ENCODE measurements at regions of chr14 and their contacts with region 1.

Region 1: DNA sequence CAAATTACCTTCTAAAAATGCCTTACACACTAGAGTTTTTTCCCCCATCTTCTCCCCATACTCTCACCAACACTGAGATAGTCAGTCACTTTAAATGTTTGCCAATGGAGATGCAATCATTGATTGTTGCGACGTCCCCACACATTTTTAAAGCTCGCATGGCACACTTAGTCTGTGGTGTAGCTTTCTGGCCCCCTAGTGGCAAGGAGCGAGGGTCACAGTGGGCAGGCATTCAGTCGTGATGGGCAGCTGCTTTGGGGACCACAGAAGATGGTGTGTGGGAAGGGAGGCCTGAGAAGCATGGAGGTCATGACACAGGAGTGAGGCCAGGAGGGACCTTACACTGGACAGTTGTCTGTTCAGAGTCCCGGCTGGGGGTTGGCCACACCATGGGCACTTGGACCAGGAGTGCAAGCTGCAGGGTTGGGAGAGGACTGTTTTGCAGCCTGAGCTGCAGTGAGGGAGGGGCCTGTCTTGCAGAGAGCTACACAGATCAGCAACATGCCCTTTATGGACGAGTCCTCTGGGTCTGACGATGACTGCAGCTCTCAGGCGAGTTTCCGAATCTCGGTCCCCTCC is 28.7 kb downstream of the PIGH start:
- DNase-seq: peak; percentile 78
- H3K4me3 Mint-ChIP-seq: no peak overlapping the region
- H3K27ac Mint-ChIP-seq: no peak overlapping the region
- H3K4me1 Mint-ChIP-seq: peaks cover 13% of the 10 kb centered on the region
- H3K27me3 Mint-ChIP-seq: no peaks in the 10 kb centered on the region

Region 2: GRCh38 chr14:67426983-67427606 is 144.3 kb before region 1 on chr14:
- CTCF ChIA-PET with region 1: interaction called, 27 read pairs
- POLR2A ChIA-PET with region 1: no interaction called
- DNase-seq: peak; percentile 84
- H3K4me3 Mint-ChIP-seq: no peak overlapping the region
- H3K27ac Mint-ChIP-seq: no peak overlapping the region
- H3K4me1 Mint-ChIP-seq: peaks cover 6% of the 10 kb centered on the region
- H3K27me3 Mint-ChIP-seq: peaks cover 26% of the 10 kb centered on the region

Region 3: GRCh38 chr14:67557126-67557525 is 14.2 kb before region 1 on chr14:
- CTCF ChIA-PET with region 1: interaction called, 11 read pairs
- POLR2A ChIA-PET with region 1: no interaction called
- DNase-seq: no peak
- H3K4me3 Mint-ChIP-seq: no peak overlapping the region
- H3K27ac Mint-ChIP-seq: no peak overlapping the region
- H3K4me1 Mint-ChIP-seq: no peaks in the 10 kb centered on the region
- H3K27me3 Mint-ChIP-seq: peaks cover 3% of the 10 kb centered on the region

Region 4: DNA sequence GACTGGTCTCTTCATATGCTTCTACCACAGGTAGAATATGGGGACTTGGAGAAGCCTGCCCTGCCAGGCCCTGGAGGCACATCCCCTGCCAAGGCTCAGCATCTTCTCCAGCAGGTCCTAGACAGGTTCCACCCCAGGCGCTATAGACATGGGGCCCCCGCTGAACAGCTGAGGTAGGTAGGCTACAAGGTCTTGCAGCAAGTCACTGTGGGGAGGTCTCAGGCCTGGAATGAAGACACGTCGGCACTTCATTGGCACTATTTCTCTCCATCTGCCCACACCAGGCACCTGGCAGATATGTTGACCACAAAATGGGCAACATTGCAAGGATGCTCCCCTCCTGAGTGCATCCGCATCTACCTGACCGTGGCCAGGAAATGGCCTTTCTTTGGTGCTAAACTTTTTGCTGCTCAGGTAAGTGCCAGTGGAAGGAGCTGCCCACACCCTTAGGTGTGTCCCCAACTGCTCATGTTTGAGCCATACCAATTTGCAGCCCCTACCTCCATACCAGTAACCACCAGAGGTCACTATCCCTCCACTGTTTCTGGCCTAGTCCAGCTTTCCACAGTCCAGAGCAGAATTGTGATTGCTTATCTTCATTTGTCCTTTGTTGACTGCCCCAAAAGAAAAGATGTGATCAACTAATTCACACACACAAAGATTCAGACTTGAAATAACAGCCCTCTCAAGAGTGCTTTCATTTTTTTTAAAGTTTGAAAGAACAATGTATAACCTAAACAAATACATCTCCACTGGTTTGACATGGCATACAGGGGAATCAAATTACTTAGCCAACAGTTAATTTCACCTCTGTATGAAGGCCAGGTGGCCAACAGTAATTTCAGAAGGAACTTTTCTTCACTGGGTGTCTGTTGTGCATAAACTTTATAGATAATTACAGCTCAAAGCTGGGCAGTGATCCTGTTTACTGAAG is 12.6 kb after region 1 on chr14:
- CTCF ChIA-PET with region 1: interaction called, 10 read pairs
- POLR2A ChIA-PET with region 1: no interaction called
- DNase-seq: peak; percentile 40
- H3K4me3 Mint-ChIP-seq: no peak overlapping the region
- H3K27ac Mint-ChIP-seq: no peak overlapping the region
- H3K4me1 Mint-ChIP-seq: peaks cover 7% of the 10 kb centered on the region
- H3K27me3 Mint-ChIP-seq: no peaks in the 10 kb centered on the region

Region 5: GRCh38 chr14:67589204-67589770 is 17.9 kb after region 1 on chr14:
- CTCF ChIA-PET with region 1: interaction called, 10 read pairs
- POLR2A ChIA-PET with region 1: no interaction called
- DNase-seq: no peak
- H3K4me3 Mint-ChIP-seq: no peak overlapping the region
- H3K27ac Mint-ChIP-seq: no peak overlapping the region
- H3K4me1 Mint-ChIP-seq: no peaks in the 10 kb centered on the region
- H3K27me3 Mint-ChIP-seq: no peaks in the 10 kb centered on the region

Region 6: DNA sequence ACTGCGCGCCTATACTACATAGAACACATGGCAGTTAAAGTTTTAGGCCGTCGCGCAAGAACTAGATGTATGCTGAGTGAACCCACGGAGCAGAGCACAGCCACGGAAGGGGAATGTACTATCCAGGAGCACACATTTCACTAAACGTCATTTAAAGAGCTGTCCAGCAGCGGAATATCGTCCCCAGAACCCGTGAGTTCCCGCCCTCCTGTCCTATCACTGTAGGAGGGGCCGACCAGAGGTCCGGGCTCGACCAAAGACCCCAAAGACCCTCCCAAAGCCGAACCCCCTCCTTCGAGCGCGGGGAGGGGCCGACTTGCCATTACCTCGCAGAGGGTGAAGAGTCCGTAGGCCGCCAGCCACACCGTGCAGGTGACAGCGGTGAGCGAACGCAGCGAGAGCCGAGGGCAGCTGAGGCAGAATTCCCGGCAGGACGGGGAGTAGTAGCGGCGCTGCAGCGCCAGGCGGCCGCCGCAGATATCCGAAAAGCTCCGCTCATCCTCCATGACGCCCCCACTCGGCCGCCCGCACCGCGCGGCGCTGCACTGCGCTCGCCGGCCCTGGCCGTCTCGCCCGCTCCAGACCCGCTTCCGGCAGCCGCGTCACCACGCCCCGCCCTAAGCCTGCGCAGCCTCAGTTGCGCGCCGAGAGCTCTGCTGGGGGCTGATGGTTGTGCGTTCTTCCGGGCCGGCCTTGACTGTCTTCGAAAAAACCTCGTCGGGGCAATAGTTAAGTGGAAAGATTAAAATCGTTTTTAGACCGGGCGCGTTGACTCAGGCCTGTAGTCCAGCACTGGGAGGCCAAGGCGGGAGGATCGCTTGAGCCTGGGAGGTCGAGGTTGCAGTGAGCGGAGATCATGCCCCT is 28.6 kb after region 1 on chr14 and contains the start of gene PIGH:
- CTCF ChIA-PET with region 1: interaction called, 12 read pairs
- POLR2A ChIA-PET with region 1: no interaction called
- DNase-seq: peak; percentile 94
- H3K4me3 Mint-ChIP-seq: peak within 1 kb of the TSS; percentile 92
- H3K27ac Mint-ChIP-seq: peak within 1 kb of the TSS; percentile 91
- H3K4me1 Mint-ChIP-seq: peaks cover 40% of the 10 kb centered on the region
- H3K27me3 Mint-ChIP-seq: no peaks in the 10 kb centered on the region
- total RNA-seq, gene PIGH: 17.4 to 18.5 TPM

Region 7: GRCh38 chr14:67766172-67766680 is 194.9 kb after region 1 on chr14:
- CTCF ChIA-PET with region 1: no interaction called
- POLR2A ChIA-PET with region 1: no interaction called
- DNase-seq: no peak
- H3K4me3 Mint-ChIP-seq: no peak overlapping the region
- H3K27ac Mint-ChIP-seq: no peak overlapping the region
- H3K4me1 Mint-ChIP-seq: no peaks in the 10 kb centered on the region
- H3K27me3 Mint-ChIP-seq: no peaks in the 10 kb centered on the region

Measured in activated CD4-positive, alpha-beta T cell treated with anti-CD3 and anti-CD28 coated beads, Interleukin-2, amount 10 ng/mL, durations not matched to agents 7 days and 5 days (primary cell).